HEK293 (cell line): ENCODE measurements at regions of chr5 and their contacts with region 1.

Region 1: GRCh38 chr5:81165493-81166119 is 67.5 kb upstream of the CKMT2 start:
- H3K4me3 ChIP-seq: no peak overlapping the region
- H3K27ac ChIP-seq: no peak overlapping the region
- H3K4me1 ChIP-seq: no peaks in the 10 kb centered on the region
- CTCF ChIP-seq: peak; percentile 58

Region 2: GRCh38 chr5:80711938-80712337 is 453.7 kb before region 1 on chr5:
- CTCF ChIA-PET with region 1: interaction called, 22 read pairs
- POLR2A ChIA-PET with region 1: no interaction called
- H3K4me3 ChIP-seq: no peak overlapping the region
- H3K27ac ChIP-seq: no peak overlapping the region
- H3K4me1 ChIP-seq: no peaks in the 10 kb centered on the region
- CTCF ChIP-seq: peak; percentile 36; the same call in 1 of the 2 replicates

Region 3: DNA sequence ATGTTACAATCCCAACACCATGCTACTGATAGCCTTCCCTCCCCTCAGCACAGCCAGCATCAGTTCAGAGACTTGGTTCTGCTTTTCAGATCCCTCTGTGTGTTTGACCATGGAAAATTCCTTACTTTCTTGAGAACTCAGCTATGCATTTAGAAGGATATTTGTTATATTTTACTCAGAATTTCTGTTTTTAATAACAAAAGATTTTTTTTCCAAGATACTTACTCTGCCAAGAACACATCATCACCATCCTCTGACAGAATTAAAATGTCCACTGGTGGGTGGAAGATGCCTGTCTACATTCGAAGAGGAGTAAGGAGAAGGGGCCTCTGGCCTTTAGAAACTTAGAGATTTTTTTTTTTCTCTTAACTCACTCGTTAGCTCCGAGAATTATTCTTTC is 11.5 kb after region 1 on chr5:
- CTCF ChIA-PET with region 1: interaction called, 18 read pairs
- POLR2A ChIA-PET with region 1: no interaction called
- H3K4me3 ChIP-seq: no peak overlapping the region
- H3K27ac ChIP-seq: no peak overlapping the region
- H3K4me1 ChIP-seq: no peaks in the 10 kb centered on the region; the same call in 1 of the 2 replicates
- CTCF ChIP-seq: no peak